Activated CD8-positive, alpha-beta memory T cell treated with anti-CD3 and anti-CD28 coated beads, Interleukin-2, amount 10 ng/mL, durations not matched to agents 7 days and 5 days (primary cell): ENCODE measurements at regions of chr1 and their contacts with region 1.

Region 1: GRCh38 chr1:212368073-212368484 is 46.6 kb downstream of the PACC1 start:
- DNase-seq: peak; percentile 75
- ATAC-seq: peak; percentile 96
- H3K4me3 Mint-ChIP-seq: no peak overlapping the region
- H3K27ac Mint-ChIP-seq: no peak overlapping the region
- H3K4me1 Mint-ChIP-seq: peaks cover 1% of the 10 kb centered on the region
- H3K27me3 Mint-ChIP-seq: no peaks in the 10 kb centered on the region

Region 2: GRCh38 chr1:211680752-211681327 is 687.2 kb before region 1 on chr1:
- CTCF ChIA-PET with region 1: interaction called, 11 read pairs
- DNase-seq: peak; percentile 83
- ATAC-seq: peak; percentile 95
- H3K4me3 Mint-ChIP-seq: no peak overlapping the region
- H3K27ac Mint-ChIP-seq: peak overlapping the region; percentile 67
- H3K4me1 Mint-ChIP-seq: peaks cover 9% of the 10 kb centered on the region
- H3K27me3 Mint-ChIP-seq: peaks cover 3% of the 10 kb centered on the region

Region 3: GRCh38 chr1:212062832-212063438 is 305.1 kb before region 1 on chr1:
- CTCF ChIA-PET with region 1: interaction called, 27 read pairs
- DNase-seq: no peak
- ATAC-seq: no peak
- H3K4me3 Mint-ChIP-seq: no peak overlapping the region
- H3K27ac Mint-ChIP-seq: no peak overlapping the region
- H3K4me1 Mint-ChIP-seq: peaks cover 3% of the 10 kb centered on the region
- H3K27me3 Mint-ChIP-seq: no peaks in the 10 kb centered on the region

Region 4: DNA sequence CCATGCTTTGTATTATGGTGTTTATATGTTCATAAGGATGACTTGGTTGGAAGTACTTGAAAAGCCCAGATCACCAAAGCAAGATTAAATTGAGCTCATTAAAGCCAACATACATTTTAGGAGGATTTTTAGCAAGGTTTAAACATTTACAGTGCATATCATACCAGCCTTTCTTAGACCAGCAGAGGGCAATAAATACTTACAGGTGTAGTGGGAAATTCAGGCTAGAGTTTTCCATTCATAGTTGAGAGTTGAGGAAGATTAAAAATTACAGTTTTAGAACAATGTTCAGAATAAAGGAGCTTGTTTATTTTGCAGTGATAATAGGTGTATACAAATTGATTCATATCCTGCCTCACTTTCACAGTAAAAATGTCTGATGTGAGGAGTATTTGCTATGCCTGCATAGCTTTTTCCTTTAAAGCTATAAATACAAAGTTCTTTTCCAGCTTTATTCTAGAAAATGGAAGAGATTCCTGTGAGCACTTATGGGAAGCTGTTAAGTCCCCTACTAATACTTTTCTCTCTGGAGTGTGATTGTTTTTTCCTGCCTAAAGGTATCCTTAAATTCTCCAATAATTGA is 297.3 kb before region 1 on chr1:
- CTCF ChIA-PET with region 1: interaction called, 35 read pairs
- DNase-seq: no peak
- ATAC-seq: peak; percentile 47
- H3K4me3 Mint-ChIP-seq: no peak overlapping the region
- H3K27ac Mint-ChIP-seq: no peak overlapping the region
- H3K4me1 Mint-ChIP-seq: peaks cover 3% of the 10 kb centered on the region
- H3K27me3 Mint-ChIP-seq: no peaks in the 10 kb centered on the region

Region 5: GRCh38 chr1:212284744-212285684 is 83.1 kb before region 1 on chr1 and contains the start of gene PPP2R5A:
- CTCF ChIA-PET with region 1: interaction called, 11 read pairs
- DNase-seq: peak; percentile 99
- ATAC-seq: peak; percentile 91
- H3K4me3 Mint-ChIP-seq: peak within 1 kb of the TSS; percentile 90
- H3K27ac Mint-ChIP-seq: peak within 1 kb of the TSS; percentile 96
- H3K4me1 Mint-ChIP-seq: peaks cover 35% of the 10 kb centered on the region
- H3K27me3 Mint-ChIP-seq: no peaks in the 10 kb centered on the region
- total RNA-seq, gene PPP2R5A: 42.7 to 44.0 TPM